Colonic mucosa (tissue), 4 donors: ENCODE measurements at regions of chr9 and their contacts with region 1.

Region 1: GRCh38 chr9:70602321-70603019 is 188.0 kb upstream of the KLF9 start:
- DNase-seq: peak; percentile 51
- H3K4me3 ChIP-seq: no peak overlapping the region
- H3K27ac ChIP-seq: peak overlapping the region; percentile 30
- H3K4me1 ChIP-seq: no peaks in the 10 kb centered on the region
- H3K27me3 ChIP-seq: no peaks in the 10 kb centered on the region
- CTCF ChIP-seq: peak; percentile 60

Region 2: GRCh38 chr9:69971643-69972449 is 630.6 kb before region 1 on chr9:
- intact Hi-C with region 1: loop called (anchors 2 kb)
- DNase-seq: peak; percentile 72
- H3K4me3 ChIP-seq: no peak overlapping the region
- H3K27ac ChIP-seq: no peak overlapping the region
- H3K4me1 ChIP-seq: no peaks in the 10 kb centered on the region
- H3K27me3 ChIP-seq: no peaks in the 10 kb centered on the region
- CTCF ChIP-seq: peak; percentile 69

Region 3: GRCh38 chr9:70049236-70049635 is 553.2 kb before region 1 on chr9:
- intact Hi-C with region 1: no loop called
- DNase-seq: peak; percentile 57
- H3K4me3 ChIP-seq: no peak overlapping the region
- H3K27ac ChIP-seq: peak overlapping the region; percentile 25
- H3K4me1 ChIP-seq: no peaks in the 10 kb centered on the region
- H3K27me3 ChIP-seq: peaks cover 4% of the 10 kb centered on the region
- CTCF ChIP-seq: no peak

Region 4: GRCh38 chr9:70111042-70111602 is 491.3 kb before region 1 on chr9:
- intact Hi-C with region 1: loop called (anchors 10 kb)
- DNase-seq: peak; percentile 77
- H3K4me3 ChIP-seq: no peak overlapping the region
- H3K27ac ChIP-seq: no peak overlapping the region
- H3K4me1 ChIP-seq: no peaks in the 10 kb centered on the region
- H3K27me3 ChIP-seq: no peaks in the 10 kb centered on the region
- CTCF ChIP-seq: peak; percentile 86

Region 5: DNA sequence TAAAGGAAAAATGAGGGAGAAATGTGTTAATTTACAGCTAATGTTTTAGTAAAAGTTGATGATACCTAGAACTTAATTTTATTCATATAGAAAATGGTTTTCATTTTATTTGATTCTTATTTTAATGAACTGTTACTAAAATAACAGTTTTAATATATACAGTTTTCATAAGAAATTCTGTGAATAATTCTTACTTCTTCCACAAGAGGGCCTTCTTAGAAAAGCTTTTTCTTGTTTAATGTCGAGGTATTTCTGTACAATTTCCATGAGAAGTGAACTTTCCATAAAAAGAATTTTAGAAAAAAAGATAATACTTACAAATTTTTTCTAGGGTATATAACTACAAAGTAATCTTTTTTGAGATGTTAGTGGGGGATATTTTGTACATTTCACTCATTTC is 261.9 kb before region 1 on chr9:
- intact Hi-C with region 1: loop called (anchors 5 kb)
- DNase-seq: no peak
- H3K4me3 ChIP-seq: no peak overlapping the region
- H3K27ac ChIP-seq: no peak overlapping the region
- H3K4me1 ChIP-seq: no peaks in the 10 kb centered on the region
- H3K27me3 ChIP-seq: no peaks in the 10 kb centered on the region
- CTCF ChIP-seq: peak; percentile 42

Region 6: GRCh38 chr9:70352802-70353201 is 249.7 kb before region 1 on chr9:
- intact Hi-C with region 1: loop called (anchors 5 kb)
- DNase-seq: no peak
- H3K4me3 ChIP-seq: no peak overlapping the region
- H3K27ac ChIP-seq: no peak overlapping the region
- H3K4me1 ChIP-seq: no peaks in the 10 kb centered on the region
- H3K27me3 ChIP-seq: no peaks in the 10 kb centered on the region
- CTCF ChIP-seq: peak; percentile 28

Region 7: GRCh38 chr9:70419546-70420266 is 182.8 kb before region 1 on chr9:
- intact Hi-C with region 1: loop called (anchors 10 kb)
- DNase-seq: peak; percentile 95
- H3K4me3 ChIP-seq: peak overlapping the region; percentile 52
- H3K27ac ChIP-seq: peak overlapping the region; percentile 98
- H3K4me1 ChIP-seq: peaks cover 14% of the 10 kb centered on the region
- H3K27me3 ChIP-seq: no peaks in the 10 kb centered on the region
- CTCF ChIP-seq: no peak

Region 8: DNA sequence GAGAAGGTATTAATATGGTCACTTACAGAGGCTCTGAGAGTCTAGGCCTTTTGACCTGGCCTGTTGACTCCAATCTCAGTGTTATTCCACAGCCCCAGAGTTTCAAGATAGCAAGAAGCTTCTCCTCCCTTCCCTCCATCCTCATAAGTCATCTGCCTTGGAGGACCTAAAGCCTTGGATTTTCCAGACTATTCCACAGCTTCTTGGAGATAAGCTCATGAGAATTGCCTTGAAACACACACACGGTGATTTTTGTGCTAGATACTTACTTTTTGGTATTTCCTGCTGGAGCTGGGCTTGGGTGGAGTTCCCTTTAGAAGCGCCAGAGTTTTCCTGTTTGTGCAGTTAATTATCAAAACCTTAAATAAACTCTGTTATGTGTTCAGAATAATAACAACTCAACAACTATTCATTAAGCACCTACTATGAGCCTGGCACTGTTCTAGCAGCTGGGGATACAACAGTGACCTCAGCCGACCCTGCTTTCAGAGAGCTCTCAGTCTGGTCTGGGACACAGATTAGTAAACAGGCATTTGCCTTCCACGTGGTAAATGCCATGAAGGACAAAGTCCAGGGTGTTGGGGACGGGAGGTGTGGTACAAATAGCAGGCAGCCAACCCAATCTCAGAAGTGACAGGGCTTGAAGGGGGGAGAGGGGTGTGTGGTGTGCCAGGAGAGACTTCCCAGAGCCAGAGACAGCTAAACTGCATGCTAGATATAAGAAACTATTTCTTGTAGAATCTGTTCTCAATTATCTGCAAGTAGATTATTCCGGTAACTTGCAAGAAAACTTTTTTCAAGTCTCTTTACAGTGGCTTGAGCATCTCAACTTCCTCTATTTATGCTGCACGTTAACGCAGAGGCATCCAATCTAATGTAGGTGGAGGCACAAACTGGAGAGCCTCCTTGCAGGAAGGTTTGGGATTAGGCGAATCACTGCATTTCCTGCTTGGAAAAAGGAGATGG is 132.1 kb before region 1 on chr9:
- intact Hi-C with region 1: no loop called
- DNase-seq: peak; percentile 89
- H3K4me3 ChIP-seq: no peak overlapping the region
- H3K27ac ChIP-seq: peak overlapping the region; percentile 77
- H3K4me1 ChIP-seq: peaks cover 8% of the 10 kb centered on the region
- H3K27me3 ChIP-seq: no peaks in the 10 kb centered on the region
- CTCF ChIP-seq: no peak

Region 9: GRCh38 chr9:70484210-70485130 is 118.0 kb before region 1 on chr9:
- intact Hi-C with region 1: loop called (anchors 10 kb)
- DNase-seq: peak; percentile 57
- H3K4me3 ChIP-seq: no peak overlapping the region
- H3K27ac ChIP-seq: peak overlapping the region; percentile 9
- H3K4me1 ChIP-seq: no peaks in the 10 kb centered on the region
- H3K27me3 ChIP-seq: no peaks in the 10 kb centered on the region
- CTCF ChIP-seq: peak; percentile 54